SK-N-SH (cell line): ENCODE measurements at regions of chr20 and their contacts with region 1.

Region 1: GRCh38 chr20:19784511-19785172 is 26.6 kb downstream of the RIN2 start:
- DNase-seq: peak; percentile 69
- H3K4me3 ChIP-seq: peak overlapping the region in 1 of 2 experiments; percentile 33; a peak in 2 of 4 replicates
- H3K27ac ChIP-seq: peak overlapping the region; percentile 50 to 92
- H3K4me1 ChIP-seq: peaks cover 18 to 25% of the 10 kb centered on the region in 2 experiments
- H3K27me3 ChIP-seq: no peaks in the 10 kb centered on the region
- CTCF ChIP-seq: peak; percentile 84
- EP300 ChIP-seq: no peak
- RAD21 ChIP-seq: peak; percentile 95

Region 2: GRCh38 chr20:18904624-18905023 is 880.0 kb before region 1 on chr20:
- CTCF ChIA-PET with region 1: no interaction called
- POLR2A ChIA-PET with region 1: no interaction called
- DNase-seq: no peak
- H3K4me3 ChIP-seq: no peak overlapping the region
- H3K27ac ChIP-seq: no peak overlapping the region
- H3K4me1 ChIP-seq: no peaks in the 10 kb centered on the region
- H3K27me3 ChIP-seq: no peaks in the 10 kb centered on the region
- CTCF ChIP-seq: peak; percentile 38
- EP300 ChIP-seq: no peak
- RAD21 ChIP-seq: no peak

Region 3: DNA sequence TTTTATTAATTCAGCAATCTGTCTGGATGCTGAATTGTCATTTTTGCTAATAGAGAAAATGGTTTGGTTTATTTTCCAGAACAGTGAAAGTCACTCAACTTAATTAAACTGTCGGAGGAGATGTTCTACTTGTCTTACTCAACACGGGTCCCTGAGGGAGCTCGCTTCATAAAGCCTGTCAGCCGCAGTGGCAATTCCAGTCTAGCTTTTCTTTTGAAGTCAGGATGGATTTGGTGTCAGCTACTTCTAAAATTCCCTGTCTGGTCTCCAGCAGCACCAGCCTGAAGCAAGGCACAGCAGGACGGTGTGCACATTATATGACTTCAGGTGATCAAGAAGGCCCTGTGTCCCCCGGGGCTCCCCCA is 310.7 kb before region 1 on chr20:
- CTCF ChIA-PET with region 1: no interaction called
- POLR2A ChIA-PET with region 1: no interaction called
- DNase-seq: no peak
- H3K4me3 ChIP-seq: no peak overlapping the region
- H3K27ac ChIP-seq: no peak overlapping the region
- H3K4me1 ChIP-seq: no peaks in the 10 kb centered on the region
- H3K27me3 ChIP-seq: peaks cover 39% of the 10 kb centered on the region; the same call in 1 of the 2 replicates
- CTCF ChIP-seq: no peak
- EP300 ChIP-seq: no peak
- RAD21 ChIP-seq: no peak

Region 4: DNA sequence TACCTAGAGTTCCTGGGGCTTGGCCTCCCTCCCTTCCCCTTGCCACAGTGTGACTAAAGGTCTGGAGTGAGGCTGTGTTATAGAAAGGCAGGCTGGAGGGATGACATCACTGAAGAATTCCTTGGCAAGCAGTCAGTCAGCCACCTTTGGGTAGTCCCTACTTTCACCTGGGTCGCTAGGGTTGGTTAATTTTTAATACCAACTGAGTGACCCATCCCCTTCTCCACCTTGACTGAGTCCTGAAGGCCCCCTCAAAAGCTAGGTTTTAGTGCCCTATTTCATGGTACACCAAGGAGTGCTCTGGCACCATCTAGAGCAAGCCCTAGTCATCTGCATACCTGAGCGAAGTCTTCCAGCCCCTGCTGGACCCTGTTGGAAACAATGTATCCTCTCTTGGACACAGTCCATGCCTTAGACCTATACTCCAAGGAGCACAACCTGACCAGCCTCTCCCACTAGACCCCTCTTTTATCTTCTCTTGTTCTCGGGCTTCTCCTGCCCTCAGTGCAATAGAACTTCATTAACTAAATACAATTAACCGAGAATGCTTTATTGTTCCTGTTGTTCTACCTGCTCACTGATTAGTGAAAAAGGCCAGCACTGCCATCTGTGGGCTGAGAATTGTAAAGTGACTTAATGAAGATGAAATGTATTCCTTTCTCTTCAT is 18.0 kb after region 1 on chr20:
- CTCF ChIA-PET with region 1: interaction called, 17 read pairs
- POLR2A ChIA-PET with region 1: no interaction called
- DNase-seq: no peak
- H3K4me3 ChIP-seq: no peak overlapping the region
- H3K27ac ChIP-seq: no peak overlapping the region
- H3K4me1 ChIP-seq: peaks cover 12 to 13% of the 10 kb centered on the region in 2 experiments; a peak in 3 of 4 replicates
- H3K27me3 ChIP-seq: no peaks in the 10 kb centered on the region
- CTCF ChIP-seq: peak; percentile 21; the same call in 1 of the 2 replicates
- EP300 ChIP-seq: no peak
- RAD21 ChIP-seq: no peak

Region 5: GRCh38 chr20:19835533-19836222 is 51.0 kb after region 1 on chr20:
- CTCF ChIA-PET with region 1: interaction called, 10 read pairs
- POLR2A ChIA-PET with region 1: no interaction called
- DNase-seq: peak; percentile 79
- H3K4me3 ChIP-seq: no peak overlapping the region
- H3K27ac ChIP-seq: peak overlapping the region in 1 of 2 experiments; percentile 60; a peak in 2 of 4 replicates
- H3K4me1 ChIP-seq: peaks cover 5 to 19% of the 10 kb centered on the region in 2 experiments; a peak in 3 of 4 replicates
- H3K27me3 ChIP-seq: no peaks in the 10 kb centered on the region
- CTCF ChIP-seq: no peak
- EP300 ChIP-seq: peak in 1 of 2 experiments; percentile 85; a peak in 2 of 4 replicates
- RAD21 ChIP-seq: peak; percentile 38; the same call in 1 of the 2 replicates

Region 6: GRCh38 chr20:19995220-19995863 is 210.7 kb after region 1 on chr20:
- CTCF ChIA-PET with region 1: interaction called, 26 read pairs
- POLR2A ChIA-PET with region 1: interaction called, 3 read pairs
- DNase-seq: peak; percentile 60
- H3K4me3 ChIP-seq: peak overlapping the region in 1 of 2 experiments; percentile 33; a peak in 1 of 4 replicates
- H3K27ac ChIP-seq: peak overlapping the region; percentile 93 to 99
- H3K4me1 ChIP-seq: peaks cover 33 to 48% of the 10 kb centered on the region in 2 experiments
- H3K27me3 ChIP-seq: no peaks in the 10 kb centered on the region
- CTCF ChIP-seq: peak; percentile 97
- EP300 ChIP-seq: no peak
- RAD21 ChIP-seq: peak; percentile 88